Activated T-helper 1 cell treated with anti-CD3 and anti-CD28 coated beads, Interleukin-12 subunit alpha, Interleukin-12 subunit beta, Interleukin-2, Interleukin-4 antibody, amounts not matched to agents 30 ng/mL and 10 ng/mL and 1 ng/mL, durations not matched to agents 14 hours and 24 hours and 36 hours (primary cell): ENCODE measurements at regions of chr3 and their contacts with region 1.

Region 1: DNA sequence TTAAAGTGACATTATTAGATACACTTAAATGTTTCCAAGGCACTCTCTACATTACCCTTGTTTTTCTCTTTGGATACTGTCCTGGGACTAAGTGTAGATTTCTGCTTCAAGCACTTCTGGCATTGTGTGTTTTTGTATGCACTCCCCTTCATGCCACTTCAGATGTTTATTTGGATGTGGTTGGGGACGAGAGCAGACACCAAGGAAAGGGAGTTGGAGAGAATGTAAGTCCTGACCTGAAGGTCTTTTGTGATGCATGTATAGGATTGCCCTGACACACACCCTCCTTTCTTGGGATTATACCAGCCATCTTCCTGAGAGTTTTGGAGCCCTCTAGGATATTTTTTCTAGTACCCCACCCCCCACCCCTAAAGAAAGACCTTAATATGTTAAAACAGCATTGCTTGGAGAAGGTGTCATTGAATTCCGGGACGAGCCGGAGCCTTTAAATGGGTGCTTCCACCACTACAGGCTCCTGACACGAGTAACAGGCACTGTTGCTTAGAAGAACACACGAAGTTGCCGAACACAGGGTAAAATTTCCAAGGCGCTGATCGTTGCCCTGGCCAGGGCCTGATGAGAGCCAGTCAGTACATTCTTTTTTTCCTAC is 22.7 kb downstream of the PSMD6 start:
- DNase-seq: no peak
- H3K4me3 Mint-ChIP-seq: no peak overlapping the region
- H3K27ac Mint-ChIP-seq: no peak overlapping the region
- H3K4me1 Mint-ChIP-seq: no peaks in the 10 kb centered on the region
- H3K27me3 Mint-ChIP-seq: no peaks in the 10 kb centered on the region

Region 2: GRCh38 chr3:64023187-64023848 is 22.8 kb after region 1 on chr3 and contains the start of gene PSMD6:
- intact Hi-C with region 1: loop called (anchors 2 kb)
- DNase-seq: peak; percentile 93
- H3K4me3 Mint-ChIP-seq: peak within 1 kb of the TSS; percentile 81
- H3K27ac Mint-ChIP-seq: peak within 1 kb of the TSS; percentile 88
- H3K4me1 Mint-ChIP-seq: peaks cover 30% of the 10 kb centered on the region
- H3K27me3 Mint-ChIP-seq: peaks cover 12% of the 10 kb centered on the region
- total RNA-seq, gene PSMD6: 133 and 137 TPM in 2 replicates